Posterior vena cava (tissue), 2 donors: ENCODE measurements at regions of chr6 and their contacts with region 1.

Region 1: DNA sequence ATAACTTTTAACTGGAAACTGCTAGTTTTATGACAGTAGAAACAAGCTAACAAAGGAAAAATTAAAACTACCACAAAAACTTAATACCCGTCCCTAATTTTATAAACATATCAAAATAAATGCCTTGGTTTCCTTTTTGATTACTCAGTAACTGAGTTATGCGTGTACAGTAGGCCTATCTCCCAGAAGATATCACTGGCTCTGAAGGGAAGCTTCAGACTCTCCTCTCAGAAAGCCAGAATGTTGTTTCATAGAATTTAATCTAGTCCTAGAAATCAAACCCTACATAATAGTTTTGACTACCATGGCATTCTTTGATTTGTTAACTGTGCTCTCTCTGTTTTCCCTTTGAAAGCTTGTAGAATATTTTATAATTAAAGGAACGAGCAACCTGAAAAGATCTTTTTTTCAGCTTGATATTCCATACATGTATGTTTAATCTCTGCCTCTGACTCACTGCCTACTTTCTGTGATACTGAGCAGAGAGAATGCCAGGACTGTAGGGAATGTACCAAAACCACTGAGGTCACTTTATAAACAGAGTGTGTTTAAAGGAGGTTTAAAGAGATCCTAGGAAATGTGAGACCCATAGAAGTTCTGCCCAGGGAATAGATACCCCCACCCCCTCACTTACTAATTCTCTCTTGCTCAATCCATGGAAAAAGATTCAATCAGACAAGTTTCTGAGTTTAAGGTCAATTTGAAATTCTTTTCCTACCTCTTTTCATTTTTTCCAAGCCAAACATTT is 311.5 kb downstream of the HDGFL1 start:
- DNase-seq: no peak

Region 2: GRCh38 chr6:22068561-22069305 is 812.1 kb before region 1 on chr6:
- intact Hi-C with region 1: loop called in 1 of 2 experiments (anchors 5 kb)
- DNase-seq: no peak